Activated naive CD4-positive, alpha-beta T cell treated with anti-CD3 and anti-CD28 coated beads, Interleukin-2, amount 10 ng/mL, durations not matched to agents 7 days and 5 days (primary cell): ENCODE measurements at regions of chr21 and their contacts with region 1.

Region 1: GRCh38 chr21:34510148-34511142 is 1.6 kb downstream of the KCNE1 start:
- DNase-seq: peak; percentile 50
- H3K4me3 Mint-ChIP-seq: no peak overlapping the region
- H3K27ac Mint-ChIP-seq: no peak overlapping the region
- H3K4me1 Mint-ChIP-seq: no peaks in the 10 kb centered on the region
- H3K27me3 Mint-ChIP-seq: no peaks in the 10 kb centered on the region

Region 2: GRCh38 chr21:34582506-34583150 is 72.2 kb after region 1 on chr21:
- CTCF ChIA-PET with region 1: interaction called, 12 read pairs
- DNase-seq: no peak
- H3K4me3 Mint-ChIP-seq: no peak overlapping the region
- H3K27ac Mint-ChIP-seq: no peak overlapping the region
- H3K4me1 Mint-ChIP-seq: peaks cover 7% of the 10 kb centered on the region
- H3K27me3 Mint-ChIP-seq: no peaks in the 10 kb centered on the region